Activated CD4-positive, alpha-beta T cell treated with anti-CD3 and anti-CD28 coated beads for 36 hours (primary cell): ENCODE measurements at regions of chr16 and their contacts with region 1.

Region 1: GRCh38 chr16:29973384-29974246 is at the start of gene TAOK2:
- DNase-seq: peak; percentile 98
- ATAC-seq: peak; percentile 98
- H3K4me3 Mint-ChIP-seq: peak within 1 kb of the TSS; percentile 87
- H3K27ac Mint-ChIP-seq: peak within 1 kb of the TSS; percentile 86
- H3K4me1 Mint-ChIP-seq: peaks cover 31% of the 10 kb centered on the region
- H3K27me3 Mint-ChIP-seq: no peaks in the 10 kb centered on the region
- total RNA-seq, gene TAOK2: 24.1 to 24.4 TPM

Region 2: GRCh38 chr16:29745853-29746345 is 227.7 kb before region 1 on chr16 and contains the start of gene C16orf54:
- CTCF ChIA-PET with region 1: no interaction called
- POLR2A ChIA-PET with region 1: no interaction called
- intact Hi-C with region 1: loop called in 1 of 2 experiments (anchors 5 kb)
- DNase-seq: peak; percentile 93
- ATAC-seq: peak; percentile 78
- H3K4me3 Mint-ChIP-seq: peak within 1 kb of the TSS; percentile 97
- H3K27ac Mint-ChIP-seq: peak within 1 kb of the TSS; percentile 97
- H3K4me1 Mint-ChIP-seq: peaks cover 59% of the 10 kb centered on the region
- H3K27me3 Mint-ChIP-seq: no peaks in the 10 kb centered on the region
- total RNA-seq, gene C16orf54: 21.3 to 22.0 TPM

Region 3: DNA sequence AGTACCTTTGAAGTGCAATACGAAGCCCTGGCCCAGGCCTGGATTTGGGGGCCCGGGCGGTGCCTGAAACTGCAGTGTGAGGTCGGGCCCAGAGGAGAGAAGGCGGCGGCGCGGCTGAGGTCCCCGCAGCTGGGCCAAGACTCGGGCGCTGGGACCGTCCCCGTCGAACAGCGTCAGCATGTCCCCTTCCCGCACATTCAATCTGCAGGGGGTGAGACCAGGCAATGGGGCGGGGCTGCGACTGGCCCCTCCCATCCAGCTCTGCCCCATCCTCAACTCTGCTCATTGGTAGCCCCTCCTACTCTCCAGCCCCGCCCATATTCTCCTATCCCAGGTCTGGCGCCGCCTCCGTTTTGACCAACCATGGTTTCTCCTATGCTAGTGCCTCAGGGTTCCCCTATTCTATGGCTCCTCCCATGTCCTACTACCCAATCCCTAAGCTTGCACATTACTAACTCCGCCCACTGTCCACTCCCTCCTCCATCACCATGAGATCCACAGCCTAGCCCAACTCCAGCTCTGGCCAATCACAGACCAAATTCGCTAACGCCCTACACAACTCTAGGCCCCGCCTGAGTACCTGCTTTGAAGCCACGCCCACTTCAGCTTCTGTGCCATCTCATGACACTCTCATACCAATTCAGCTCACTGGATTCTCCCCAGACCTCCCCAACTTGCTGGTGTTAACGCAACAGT is 96.2 kb before region 1 on chr16:
- CTCF ChIA-PET with region 1: no interaction called
- POLR2A ChIA-PET with region 1: interaction called, 10 read pairs
- intact Hi-C with region 1: no loop called
- DNase-seq: peak; percentile 85
- ATAC-seq: peak; percentile 93
- H3K4me3 Mint-ChIP-seq: peak overlapping the region; percentile 29
- H3K27ac Mint-ChIP-seq: no peak overlapping the region
- H3K4me1 Mint-ChIP-seq: peaks cover 7% of the 10 kb centered on the region
- H3K27me3 Mint-ChIP-seq: peaks cover 22% of the 10 kb centered on the region

Region 4: DNA sequence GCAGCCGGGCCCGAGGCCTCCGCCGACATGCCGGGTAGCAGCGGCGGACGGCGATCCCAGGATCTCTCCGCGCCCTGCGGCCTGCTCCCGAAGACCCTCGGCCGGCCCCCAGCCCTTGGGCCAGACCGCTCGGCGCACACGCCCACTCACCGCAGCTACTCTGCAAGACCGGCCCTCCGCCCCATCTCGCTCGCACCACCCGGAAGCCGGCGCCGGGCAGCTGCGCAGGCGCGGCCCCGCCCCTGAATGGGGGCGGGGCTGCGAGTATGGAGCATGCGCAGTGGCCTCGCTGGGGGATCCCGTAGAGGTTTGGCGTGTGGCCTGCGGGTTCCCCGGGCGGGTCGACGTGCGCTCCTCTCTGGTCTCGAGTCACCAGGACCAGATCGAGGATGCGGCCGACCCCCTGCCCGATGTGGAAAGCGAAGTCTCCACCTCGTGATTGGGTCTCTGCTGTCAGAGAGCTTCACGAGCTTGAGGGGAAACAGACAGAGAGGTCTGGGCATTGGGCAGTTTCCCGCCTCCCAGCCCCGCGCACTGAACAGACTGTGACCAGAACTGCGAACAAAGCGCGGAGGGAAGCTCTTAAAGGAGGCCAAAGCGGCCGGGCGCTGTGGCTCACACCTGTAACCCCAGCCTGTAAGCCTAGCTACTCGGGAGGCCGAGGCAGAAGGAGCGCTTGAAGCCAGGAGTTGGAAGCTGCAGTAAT is 47.5 kb before region 1 on chr16 and contains the start of gene KCTD13:
- CTCF ChIA-PET with region 1: interaction called, 5 read pairs
- POLR2A ChIA-PET with region 1: interaction called, 8 read pairs
- intact Hi-C with region 1: loop called in 1 of 2 experiments (anchors 1 kb)
- DNase-seq: peak; percentile 92
- ATAC-seq: peak; percentile 90
- H3K4me3 Mint-ChIP-seq: peak within 1 kb of the TSS; percentile 82
- H3K27ac Mint-ChIP-seq: peak within 1 kb of the TSS; percentile 95
- H3K4me1 Mint-ChIP-seq: peaks cover 32% of the 10 kb centered on the region
- H3K27me3 Mint-ChIP-seq: no peaks in the 10 kb centered on the region
- total RNA-seq, gene KCTD13: 30.4 to 33.4 TPM

Region 5: DNA sequence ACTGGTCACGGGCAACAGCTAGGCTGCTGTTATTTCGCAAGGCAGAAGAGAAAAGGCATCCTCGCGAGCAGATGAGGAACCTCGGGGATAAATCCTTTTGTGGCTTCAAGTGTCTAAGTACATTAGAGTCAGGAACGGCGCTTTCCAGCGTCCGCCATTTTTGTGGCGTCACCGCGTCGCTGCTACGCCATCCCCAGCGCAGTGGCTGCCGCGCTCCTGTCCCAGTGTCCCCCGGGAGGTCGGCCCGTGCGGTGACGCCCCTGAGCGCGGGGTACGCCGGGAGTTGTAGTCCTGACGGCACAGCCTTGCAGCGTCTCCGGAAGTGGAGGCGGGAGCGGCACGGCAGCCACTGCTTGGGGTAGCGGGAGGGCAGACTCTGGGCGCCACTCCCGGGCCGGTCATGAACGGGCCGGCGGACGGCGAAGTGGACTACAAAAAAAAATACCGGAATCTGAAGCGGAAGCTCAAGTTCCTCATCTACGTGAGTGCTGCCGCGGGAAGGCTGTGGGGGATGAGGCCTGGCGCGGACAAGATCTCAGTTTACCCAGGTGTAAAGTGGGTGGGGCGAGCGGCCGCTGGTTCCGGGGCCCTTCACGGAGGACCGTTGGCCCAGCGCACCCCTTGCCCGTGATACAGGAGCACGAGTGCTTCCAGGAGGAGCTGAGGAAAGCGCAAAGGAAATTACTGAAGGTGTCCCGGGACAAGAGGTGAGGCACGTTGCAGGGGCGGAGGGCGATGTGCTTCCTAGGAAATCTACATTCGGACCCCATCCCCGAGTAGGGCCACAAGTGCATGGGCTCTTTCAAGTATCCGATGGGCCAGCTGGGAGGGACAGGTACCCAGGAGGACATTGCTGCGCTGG is 22.5 kb after region 1 on chr16 and contains the start of gene INO80E:
- CTCF ChIA-PET with region 1: interaction called, 5 read pairs
- POLR2A ChIA-PET with region 1: interaction called, 8 read pairs
- intact Hi-C with region 1: loop called (anchors 1 kb)
- DNase-seq: peak; percentile 100
- ATAC-seq: peak; percentile 98
- H3K4me3 Mint-ChIP-seq: peak within 1 kb of the TSS; percentile 96
- H3K27ac Mint-ChIP-seq: peak within 1 kb of the TSS; percentile 98
- H3K4me1 Mint-ChIP-seq: peaks cover 25% of the 10 kb centered on the region
- H3K27me3 Mint-ChIP-seq: no peaks in the 10 kb centered on the region
- total RNA-seq, gene INO80E: 80.1 to 106 TPM